ENCODE measurements at regions of chr15 and their contacts with region 1.

Region 1: GRCh38 chr15:83446904-83447709 is at the start of gene SH3GL3:
- DNase-seq: peak; percentile 83

Region 2: GRCh38 chr15:83571820-83572707 is 125.0 kb after region 1 on chr15:
- CTCF ChIA-PET with region 1: interaction called, 13 read pairs
- POLR2A ChIA-PET with region 1: no interaction called
- DNase-seq: peak; percentile 39